ENCODE measurements at regions of chr1 and their contacts with region 1.

Region 1: GRCh38 chr1:161038523-161039153 is at the start of gene TSTD1:
- DNase-seq: peak; percentile 68 to 95 (median 86)
- ATAC-seq: peak; percentile 88
- H3K4me3 ChIP-seq: peak within 1 kb of the TSS; percentile 87 to 89
- H3K4me3 Mint-ChIP-seq: peak within 1 kb of the TSS; percentile 90
- H3K27ac ChIP-seq: peak within 1 kb of the TSS; percentile 75 to 83
- H3K27ac Mint-ChIP-seq: peak within 1 kb of the TSS; percentile 96
- H3K4me1 ChIP-seq: peaks cover 35% of the 10 kb centered on the region
- H3K4me1 Mint-ChIP-seq: peaks cover 56% of the 10 kb centered on the region
- H3K27me3 ChIP-seq: no peaks in the 10 kb centered on the region
- H3K27me3 Mint-ChIP-seq: no peaks in the 10 kb centered on the region
- CTCF ChIP-seq: no peak
- total RNA-seq, gene TSTD1: 44.8 to 46.6 TPM

Region 2: GRCh38 chr1:161013488-161014230 is 25.0 kb before region 1 on chr1:
- CTCF ChIA-PET with region 1: interaction called, 3 read pairs
- POLR2A ChIA-PET with region 1: interaction called, 12 read pairs
- intact Hi-C with region 1: no loop called
- DNase-seq: peak; percentile 21 to 86 (median 70)
- ATAC-seq: peak; percentile 90
- H3K4me3 ChIP-seq: peak overlapping the region; percentile 34 to 51
- H3K4me3 Mint-ChIP-seq: peak overlapping the region; percentile 78
- H3K27ac ChIP-seq: peak overlapping the region; percentile 32 to 86
- H3K27ac Mint-ChIP-seq: peak overlapping the region; percentile 93
- H3K4me1 ChIP-seq: peaks cover 26% of the 10 kb centered on the region
- H3K4me1 Mint-ChIP-seq: peaks cover 35% of the 10 kb centered on the region
- H3K27me3 ChIP-seq: no peaks in the 10 kb centered on the region
- H3K27me3 Mint-ChIP-seq: no peaks in the 10 kb centered on the region
- CTCF ChIP-seq: no peak

Region 3: DNA sequence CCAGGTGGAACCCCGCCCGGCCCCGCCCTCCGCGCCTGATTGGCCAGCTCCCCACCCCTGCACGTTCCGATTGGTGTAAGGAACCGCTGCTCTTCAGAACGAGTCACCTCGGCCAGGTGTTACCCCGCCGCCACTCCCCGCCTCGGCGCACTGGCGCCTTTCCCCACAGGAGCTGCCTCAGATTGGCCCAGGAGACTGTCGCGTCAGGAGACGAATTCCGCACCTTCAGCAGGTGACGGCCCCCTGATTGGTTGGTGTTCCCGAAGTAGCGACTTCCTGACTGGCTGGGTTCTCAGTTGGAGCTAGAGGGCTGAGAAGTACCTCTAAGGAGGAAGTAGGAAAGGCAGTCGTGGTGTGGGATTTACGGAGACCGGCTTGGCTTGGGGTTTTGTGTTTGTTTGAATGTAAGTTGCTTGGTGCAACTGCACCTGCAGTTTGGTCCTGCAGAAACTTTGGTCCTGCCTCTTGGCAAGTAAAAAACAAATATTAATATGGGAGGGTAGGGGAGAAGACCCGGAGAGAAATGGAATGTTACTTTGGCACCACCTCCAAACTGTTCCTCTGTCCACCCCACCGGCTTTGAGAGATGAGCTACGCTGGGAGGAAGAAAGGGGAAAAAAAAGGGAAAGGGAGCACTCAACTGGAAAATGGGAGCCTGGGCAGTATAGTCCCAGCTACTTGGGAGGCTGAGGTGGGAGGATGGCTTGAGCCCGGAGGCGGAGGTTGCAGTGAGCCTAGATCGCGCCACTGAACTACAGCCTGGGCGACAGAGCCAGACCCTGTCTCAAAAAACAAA is 17.3 kb before region 1 on chr1:
- CTCF ChIA-PET with region 1: interaction called, 5 read pairs
- POLR2A ChIA-PET with region 1: interaction called, 33 read pairs
- intact Hi-C with region 1: loop called (anchors 1 kb)
- DNase-seq: peak; percentile 75 to 95 (median 89)
- ATAC-seq: peak; percentile 94
- H3K4me3 ChIP-seq: peak overlapping the region; percentile 51 to 89
- H3K4me3 Mint-ChIP-seq: peak overlapping the region; percentile 93
- H3K27ac ChIP-seq: peak overlapping the region; percentile 22 to 73
- H3K27ac Mint-ChIP-seq: peak overlapping the region; percentile 83
- H3K4me1 ChIP-seq: peaks cover 14% of the 10 kb centered on the region
- H3K4me1 Mint-ChIP-seq: peaks cover 37% of the 10 kb centered on the region
- H3K27me3 ChIP-seq: no peaks in the 10 kb centered on the region
- H3K27me3 Mint-ChIP-seq: no peaks in the 10 kb centered on the region
- CTCF ChIP-seq: no peak

Measured in CD8-positive, alpha-beta T cell (primary cell).